ENCODE measurements at regions of chr4 and their contacts with region 1.

Region 1: GRCh38 chr4:48203819-48204218 is 65.8 kb downstream of the TEC start:
- DNase-seq: no peak
- ATAC-seq: no peak
- H3K4me3 ChIP-seq: no peak overlapping the region
- H3K4me3 Mint-ChIP-seq: no peak overlapping the region
- H3K27ac ChIP-seq: no peak overlapping the region
- H3K27ac Mint-ChIP-seq: no peak overlapping the region
- H3K4me1 ChIP-seq: no peaks in the 10 kb centered on the region
- H3K4me1 Mint-ChIP-seq: no peaks in the 10 kb centered on the region
- H3K27me3 ChIP-seq: no peaks in the 10 kb centered on the region
- H3K27me3 Mint-ChIP-seq: peaks cover 8% of the 10 kb centered on the region in 2 donors

Region 2: GRCh38 chr4:48008021-48008596 is 195.7 kb before region 1 on chr4:
- CTCF ChIA-PET with region 1: no interaction called
- POLR2A ChIA-PET with region 1: interaction called in 1 of 2 experiments, 11 read pairs
- DNase-seq: no peak
- ATAC-seq: no peak
- H3K4me3 ChIP-seq: no peak overlapping the region
- H3K4me3 Mint-ChIP-seq: no peak overlapping the region
- H3K27ac ChIP-seq: no peak overlapping the region
- H3K27ac Mint-ChIP-seq: no peak overlapping the region
- H3K4me1 ChIP-seq: no peaks in the 10 kb centered on the region
- H3K4me1 Mint-ChIP-seq: no peaks in the 10 kb centered on the region
- H3K27me3 ChIP-seq: peaks cover 0 to 10% of the 10 kb centered on the region in 2 experiments
- H3K27me3 Mint-ChIP-seq: peaks cover 3 to 11% of the 10 kb centered on the region in 2 donors

Measured in T-cell (primary cell).